Vagina (tissue), 2 donors: ENCODE measurements at regions of chr9 and their contacts with region 1.

Region 1: GRCh38 chr9:123975871-123976270 is 35.7 kb upstream of the LHX2 start:
- DNase-seq: no peak
- H3K4me3 ChIP-seq: no peak overlapping the region
- H3K27ac ChIP-seq: no peak overlapping the region
- H3K4me1 ChIP-seq: no peaks in the 10 kb centered on the region
- H3K27me3 ChIP-seq: no peaks in the 10 kb centered on the region
- CTCF ChIP-seq: no peak
- POLR2A ChIP-seq: no peak

Region 2: DNA sequence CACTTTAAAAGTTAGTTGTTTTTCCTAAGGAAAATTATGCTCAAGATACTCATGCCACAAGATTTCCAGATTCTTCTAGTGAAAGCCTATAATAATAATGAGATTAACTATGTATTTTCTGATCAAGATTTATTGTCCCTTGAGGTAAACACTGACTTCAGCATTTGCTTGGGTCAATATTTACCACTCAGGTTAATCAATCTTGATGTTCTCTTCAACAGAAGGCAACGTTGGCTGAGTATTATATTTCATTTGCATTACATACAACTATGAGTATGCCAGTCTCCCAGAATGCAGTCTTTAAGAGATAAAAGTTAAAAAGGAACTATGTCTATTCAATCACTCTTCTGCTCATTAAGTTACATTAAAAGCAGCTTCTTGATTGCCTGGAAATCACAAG is 826.8 kb before region 1 on chr9:
- intact Hi-C with region 1: loop called (anchors 10 kb)
- DNase-seq: no peak
- H3K4me3 ChIP-seq: no peak overlapping the region
- H3K27ac ChIP-seq: no peak overlapping the region
- H3K4me1 ChIP-seq: no peaks in the 10 kb centered on the region
- H3K27me3 ChIP-seq: no peaks in the 10 kb centered on the region
- CTCF ChIP-seq: no peak
- POLR2A ChIP-seq: no peak